Activated naive CD4-positive, alpha-beta T cell treated with anti-CD3 and anti-CD28 coated beads for 36 hours (primary cell): ENCODE measurements at regions of chr7 and their contacts with region 1.

Region 1: DNA sequence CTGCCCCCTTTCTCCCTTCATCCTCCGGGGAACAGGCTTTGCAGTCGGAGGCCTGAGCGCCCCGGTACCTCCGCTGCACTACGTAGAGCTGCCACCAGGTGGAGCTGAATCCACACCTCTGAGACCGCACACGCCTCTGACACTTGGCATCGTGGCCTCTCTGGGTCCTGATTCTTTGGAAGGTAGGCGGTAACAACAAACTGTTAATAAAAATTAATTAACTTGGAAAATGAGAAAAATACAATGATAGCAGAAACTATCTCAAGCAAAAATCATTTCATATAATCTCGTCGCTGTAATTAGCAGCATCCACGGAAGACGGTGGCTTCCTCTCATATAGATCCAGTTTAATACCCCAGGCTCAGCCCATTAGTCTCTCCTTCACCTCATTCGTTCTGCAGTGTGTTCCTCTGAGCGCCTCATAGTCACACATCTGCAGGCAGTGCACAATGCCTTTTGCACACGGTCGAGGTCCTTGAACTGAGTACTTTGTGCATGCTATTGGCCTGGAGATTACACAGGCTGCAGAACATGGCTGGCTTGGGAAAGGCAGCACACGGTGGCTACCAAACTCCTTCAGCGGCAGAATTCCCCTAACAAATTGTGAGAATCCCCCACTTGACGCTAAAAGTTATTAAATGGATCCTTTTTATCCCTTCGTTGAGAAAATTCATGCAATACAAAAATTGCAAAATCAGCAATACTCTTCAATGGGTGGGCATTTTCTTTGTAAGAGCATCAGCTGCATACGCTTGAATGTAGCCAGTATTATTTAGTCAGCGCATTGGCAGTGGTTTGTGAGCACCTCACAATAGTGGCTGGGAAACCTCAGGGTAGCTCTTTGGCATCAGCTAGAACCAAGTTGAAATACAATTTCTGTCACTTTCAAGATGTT is 18.7 kb downstream of the OR9A2 start:
- DNase-seq: peak; percentile 89
- H3K4me3 Mint-ChIP-seq: no peak overlapping the region
- H3K27ac Mint-ChIP-seq: no peak overlapping the region
- H3K4me1 Mint-ChIP-seq: peaks cover 3% of the 10 kb centered on the region
- H3K27me3 Mint-ChIP-seq: peaks cover 2% of the 10 kb centered on the region

Region 2: DNA sequence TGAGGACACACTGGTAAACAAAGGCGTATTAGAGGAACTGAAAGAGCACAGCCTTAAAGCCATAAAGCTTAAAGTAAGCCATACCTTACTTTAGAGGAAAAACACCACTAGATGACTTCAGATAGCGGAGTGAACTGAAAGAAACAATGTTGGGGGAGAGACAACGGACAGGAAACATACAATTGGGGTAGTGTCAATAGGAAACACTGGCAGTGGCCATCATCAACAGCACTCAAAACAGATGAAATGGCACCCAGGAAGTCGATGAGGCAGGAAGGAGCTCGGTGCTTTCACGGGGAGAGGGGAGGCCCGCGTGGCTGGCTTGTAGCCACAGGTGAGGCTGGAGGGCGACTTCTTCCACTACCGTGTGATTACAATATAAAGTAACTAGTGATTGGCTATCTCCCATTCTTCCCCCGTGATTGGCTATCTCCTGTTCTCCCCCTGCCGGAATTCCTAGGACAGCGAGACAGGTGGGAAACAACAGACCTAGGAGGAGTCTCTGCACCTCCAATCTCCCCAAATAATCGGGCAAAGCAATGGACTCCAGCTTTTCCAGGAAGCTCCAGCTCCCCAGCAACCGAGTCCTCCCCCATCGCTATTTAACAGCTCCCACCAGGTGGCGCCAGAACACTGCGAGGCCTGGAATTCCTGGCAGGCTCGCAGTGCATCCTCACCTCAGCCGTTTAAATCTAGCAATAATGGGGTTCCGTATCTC is 1032.3 kb before region 1 on chr7:
- CTCF ChIA-PET with region 1: no interaction called
- intact Hi-C with region 1: loop called (anchors 5 kb)
- DNase-seq: peak; percentile 88
- H3K4me3 Mint-ChIP-seq: peak overlapping the region; percentile 76
- H3K27ac Mint-ChIP-seq: peak overlapping the region; percentile 28
- H3K4me1 Mint-ChIP-seq: peaks cover 18% of the 10 kb centered on the region
- H3K27me3 Mint-ChIP-seq: no peaks in the 10 kb centered on the region

Region 3: DNA sequence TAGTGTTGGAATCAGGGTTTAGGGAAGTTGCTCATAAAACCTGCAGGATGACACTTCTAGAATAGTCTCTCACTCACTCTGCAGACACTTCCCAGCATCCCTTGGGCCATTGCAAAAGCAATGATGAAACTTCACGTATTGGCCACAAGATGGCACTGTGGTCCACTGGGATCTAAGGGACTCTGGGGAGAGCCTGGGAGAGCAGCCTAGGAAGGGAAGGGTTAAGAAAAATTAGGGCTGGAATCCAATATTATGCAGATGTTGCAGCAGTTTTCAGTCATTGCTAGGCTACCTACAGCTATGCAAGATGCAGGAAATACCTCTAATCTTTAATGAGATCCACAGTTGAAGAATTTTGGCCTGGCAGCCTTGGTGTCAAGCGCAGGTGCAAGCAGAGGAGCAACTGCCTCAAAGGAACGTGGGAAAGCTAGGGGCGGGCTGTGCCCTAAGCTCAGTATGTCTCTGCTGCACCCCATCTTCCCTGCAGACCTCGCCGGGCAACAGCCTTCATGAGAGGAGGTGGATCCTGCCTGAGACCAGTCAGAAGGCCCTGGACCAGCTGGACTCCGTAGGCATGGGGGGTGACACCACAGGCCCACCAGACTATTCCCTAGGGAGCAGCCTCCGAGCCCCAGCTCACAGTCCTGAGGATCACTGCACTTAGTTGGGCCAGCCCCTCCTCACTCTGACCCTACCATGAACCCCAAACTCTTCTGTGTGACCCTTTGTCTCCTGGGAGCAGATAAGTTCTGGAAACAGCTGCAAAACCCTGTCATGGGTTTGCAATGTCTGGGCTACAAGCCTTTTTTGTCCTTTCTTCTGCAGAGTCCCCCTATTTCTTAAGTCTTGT is 622.5 kb before region 1 on chr7:
- CTCF ChIA-PET with region 1: interaction called, 5 read pairs
- intact Hi-C with region 1: loop called (anchors 2 kb)
- DNase-seq: peak; percentile 76
- H3K4me3 Mint-ChIP-seq: peak overlapping the region; percentile 32
- H3K27ac Mint-ChIP-seq: peak overlapping the region; percentile 84
- H3K4me1 Mint-ChIP-seq: peaks cover 26% of the 10 kb centered on the region
- H3K27me3 Mint-ChIP-seq: no peaks in the 10 kb centered on the region

Region 4: DNA sequence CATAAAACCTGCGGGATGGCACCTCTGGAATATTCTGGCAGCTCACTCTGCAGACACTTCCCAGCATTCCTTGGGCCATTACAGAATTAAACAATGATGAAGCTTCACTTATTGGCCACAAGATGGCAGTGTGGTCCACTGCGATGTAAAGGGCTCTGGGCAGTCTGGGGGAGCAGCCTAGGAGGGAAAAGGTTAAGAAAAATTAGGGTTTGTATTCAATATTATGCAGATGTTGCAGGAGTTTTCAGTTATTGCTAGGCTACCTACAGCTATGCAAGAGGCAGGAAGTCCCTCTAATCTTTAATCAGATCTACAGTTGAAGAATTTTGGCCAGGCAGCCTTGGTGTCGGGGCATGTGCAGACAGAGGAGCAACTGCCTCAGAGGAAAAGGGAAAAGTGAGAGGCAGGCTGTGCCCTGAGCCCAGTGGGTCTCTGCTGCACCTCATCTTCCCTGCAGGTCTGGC is 492.2 kb before region 1 on chr7:
- CTCF ChIA-PET with region 1: no interaction called
- intact Hi-C with region 1: loop called (anchors 5 kb)
- DNase-seq: peak; percentile 54
- H3K4me3 Mint-ChIP-seq: no peak overlapping the region
- H3K27ac Mint-ChIP-seq: peak overlapping the region; percentile 41
- H3K4me1 Mint-ChIP-seq: peaks cover 53% of the 10 kb centered on the region
- H3K27me3 Mint-ChIP-seq: no peaks in the 10 kb centered on the region

Region 5: DNA sequence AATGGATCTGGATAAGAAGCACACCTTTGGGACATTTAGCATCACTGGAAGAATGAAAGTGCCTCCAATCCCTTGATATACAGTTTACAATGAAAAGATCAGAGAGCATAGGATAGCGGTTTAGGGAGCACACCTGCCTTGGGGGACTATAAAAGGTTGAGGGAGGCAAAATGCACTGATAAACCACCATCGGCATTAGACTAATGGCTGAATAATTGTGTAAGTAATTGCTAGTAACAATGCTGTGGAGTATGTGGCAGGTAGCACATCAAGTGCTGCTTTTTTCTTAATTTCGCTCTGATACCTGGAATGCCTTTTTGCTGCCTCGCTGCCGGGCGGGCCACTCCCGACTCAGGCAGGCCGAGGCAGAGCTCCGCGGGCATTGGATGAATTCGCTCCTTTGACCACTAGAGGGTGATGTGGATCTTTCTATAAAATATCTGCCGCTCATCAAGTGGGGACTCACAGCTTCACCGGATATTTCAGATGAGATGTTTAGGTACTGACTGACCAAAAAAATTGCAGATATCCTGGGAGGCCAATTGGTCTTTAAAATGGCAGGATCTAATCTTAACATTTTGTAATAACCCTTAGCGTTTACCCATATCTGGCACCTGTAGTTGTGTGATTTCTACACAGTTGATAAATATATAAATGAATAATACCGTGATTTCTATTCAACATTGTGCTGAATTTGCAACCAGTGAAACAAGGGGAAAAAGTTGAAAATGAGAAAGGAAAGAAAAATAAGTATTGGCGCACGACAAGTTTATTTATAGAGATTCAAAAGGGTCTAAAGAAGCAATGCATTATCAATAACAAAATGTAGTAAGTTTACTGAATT is 375.7 kb before region 1 on chr7:
- CTCF ChIA-PET with region 1: interaction called, 4 read pairs
- intact Hi-C with region 1: loop called (anchors 1 kb)
- DNase-seq: peak; percentile 66
- H3K4me3 Mint-ChIP-seq: no peak overlapping the region
- H3K27ac Mint-ChIP-seq: no peak overlapping the region
- H3K4me1 Mint-ChIP-seq: peaks cover 11% of the 10 kb centered on the region
- H3K27me3 Mint-ChIP-seq: no peaks in the 10 kb centered on the region

Region 6: GRCh38 chr7:142992464-142992863 is 15.8 kb before region 1 on chr7:
- CTCF ChIA-PET with region 1: interaction called, 10 read pairs
- intact Hi-C with region 1: no loop called
- DNase-seq: no peak
- H3K4me3 Mint-ChIP-seq: no peak overlapping the region
- H3K27ac Mint-ChIP-seq: no peak overlapping the region
- H3K4me1 Mint-ChIP-seq: no peaks in the 10 kb centered on the region
- H3K27me3 Mint-ChIP-seq: no peaks in the 10 kb centered on the region